Activated T-helper 2 cell treated with anti-CD3 and anti-CD28 coated beads, Interferon-gamma antibody, Interleukin-2, Interleukin-4, amounts not matched to agents 10 μg/mL and 5 μg/mL and 100 μg/mL, durations not matched to agents 14 hours and 24 hours and 36 hours (primary cell): ENCODE measurements at regions of chr20 and their contacts with region 1.

Region 1: DNA sequence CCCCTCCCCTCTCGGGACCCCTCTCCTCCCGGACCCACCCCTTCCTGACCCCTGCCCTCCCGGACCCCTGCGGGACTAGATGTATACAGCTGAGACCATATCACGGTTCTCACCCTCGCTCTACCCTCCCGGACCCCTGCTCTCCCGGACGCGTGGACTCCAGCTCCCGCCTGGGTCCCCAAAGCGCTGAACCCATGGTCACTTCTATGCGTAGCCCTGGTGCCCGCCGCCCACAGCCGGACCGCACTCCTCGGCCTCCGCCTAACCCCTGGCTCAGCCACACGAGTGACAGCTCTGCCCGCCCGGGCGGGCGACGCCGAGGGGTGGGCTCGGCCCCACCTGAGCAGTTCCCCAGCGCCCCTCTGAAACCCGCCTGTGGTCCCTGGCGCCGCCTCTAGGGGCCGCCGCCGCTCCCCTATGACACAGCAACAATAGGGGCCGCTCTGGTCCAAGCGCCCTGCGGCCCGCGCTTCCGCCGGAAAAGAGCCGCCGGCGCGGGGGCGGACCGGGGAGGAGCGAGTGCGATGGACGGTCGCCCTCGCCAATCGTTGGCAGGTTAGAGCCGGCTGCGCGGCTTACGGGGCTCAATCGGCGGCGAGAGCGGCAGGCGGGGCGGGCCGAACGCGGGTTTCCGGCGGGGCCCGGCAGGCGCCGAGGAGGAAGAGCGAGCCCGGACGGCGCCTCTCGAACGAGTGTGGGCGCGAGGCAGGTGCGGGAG is at the start of gene ADRM1:
- DNase-seq: peak; percentile 96
- H3K4me3 Mint-ChIP-seq: peak within 1 kb of the TSS; percentile 93
- H3K27ac Mint-ChIP-seq: peak within 1 kb of the TSS; percentile 99
- H3K4me1 Mint-ChIP-seq: peaks cover 13% of the 10 kb centered on the region
- H3K27me3 Mint-ChIP-seq: no peaks in the 10 kb centered on the region
- total RNA-seq, gene ADRM1: 152 and 171 TPM in 2 replicates

Region 2: DNA sequence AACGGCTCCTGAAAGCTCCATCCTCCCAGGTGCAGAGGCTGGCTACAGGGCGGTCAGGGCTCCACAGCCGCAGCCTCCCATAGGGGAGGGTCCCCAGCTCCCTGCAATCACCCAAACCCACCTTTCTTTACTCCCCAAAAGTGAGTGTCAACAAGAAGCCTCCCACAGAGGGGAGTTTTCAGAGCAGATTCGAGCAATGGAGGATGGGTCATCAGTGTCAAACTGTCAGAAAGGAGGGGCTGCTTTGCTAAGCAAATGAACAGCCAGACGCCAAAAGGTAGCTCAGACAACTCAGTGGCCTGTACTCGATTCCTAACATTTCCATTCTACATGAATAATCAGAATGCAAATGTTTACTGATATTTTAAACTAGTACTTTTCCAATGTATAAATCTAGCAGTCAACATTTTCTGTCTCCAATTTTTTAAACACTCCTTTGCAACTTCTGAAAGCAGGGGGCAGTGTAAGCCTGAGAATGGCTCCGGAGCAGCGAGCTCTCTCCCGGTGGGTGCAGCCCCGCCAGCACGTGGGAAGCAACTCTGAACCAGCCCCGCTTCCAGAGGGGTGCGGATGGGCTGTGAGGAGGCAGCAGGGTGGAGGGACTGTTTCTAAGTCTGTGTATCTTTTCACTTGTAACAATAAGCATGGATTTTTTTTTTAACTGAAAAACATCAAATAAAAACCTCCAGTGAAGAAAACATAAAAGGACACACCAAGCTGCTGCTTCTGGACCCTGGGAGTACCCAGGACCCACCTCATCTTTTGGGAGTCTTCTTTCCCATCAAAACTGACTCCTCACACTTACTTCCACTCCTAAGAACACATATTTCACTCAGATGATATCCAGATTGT is 291.7 kb before region 1 on chr20:
- intact Hi-C with region 1: loop called (anchors 5 kb)
- DNase-seq: peak; percentile 26
- H3K4me3 Mint-ChIP-seq: no peak overlapping the region
- H3K27ac Mint-ChIP-seq: no peak overlapping the region
- H3K4me1 Mint-ChIP-seq: peaks cover 3% of the 10 kb centered on the region
- H3K27me3 Mint-ChIP-seq: no peaks in the 10 kb centered on the region

Region 3: DNA sequence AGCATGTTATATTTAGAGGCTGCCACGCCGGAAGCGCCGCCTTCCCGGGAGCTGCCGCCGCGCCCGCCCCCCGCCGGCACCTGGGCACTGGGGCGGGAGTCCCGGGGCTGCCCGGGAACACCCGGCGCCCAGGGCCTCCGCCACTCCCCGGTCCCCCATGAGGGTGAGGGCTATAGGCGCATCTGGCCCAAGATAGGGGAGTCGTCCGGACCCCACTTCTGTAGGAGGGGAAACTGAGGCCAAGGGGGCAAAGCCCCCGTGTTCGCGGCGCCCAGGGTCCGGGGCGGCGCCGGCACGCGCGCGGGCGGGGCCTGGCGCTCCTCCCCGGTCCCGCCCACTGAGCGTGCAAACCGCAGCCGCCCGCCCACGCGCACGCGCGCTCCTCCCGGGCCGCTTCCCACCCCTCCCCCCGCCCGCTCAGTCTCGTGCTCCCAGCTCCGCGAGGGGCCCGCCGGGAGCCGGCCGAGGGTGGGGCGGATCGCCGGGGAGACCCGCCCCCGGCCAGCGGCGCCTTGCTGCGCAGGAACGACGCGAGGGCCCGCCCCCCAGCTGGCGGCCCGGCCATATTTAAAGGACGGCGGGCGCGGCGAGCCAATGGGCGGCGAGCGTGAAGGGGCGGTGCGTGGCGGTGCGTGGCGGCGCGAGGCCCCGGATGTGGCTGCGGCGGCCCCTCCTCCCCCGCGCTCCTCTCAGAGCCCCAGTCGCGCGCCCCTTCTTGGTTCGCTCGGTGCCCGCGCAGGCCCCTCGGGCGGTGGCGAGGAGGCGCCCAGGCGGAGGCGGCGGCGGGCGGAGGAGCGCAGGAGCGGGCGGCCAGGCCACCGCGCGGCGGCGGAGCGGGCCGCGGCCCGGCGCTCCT is 180.5 kb before region 1 on chr20 and contains the start of gene LSM14B:
- intact Hi-C with region 1: loop called (anchors 5 kb)
- DNase-seq: peak; percentile 94
- H3K4me3 Mint-ChIP-seq: peak within 1 kb of the TSS; percentile 86
- H3K27ac Mint-ChIP-seq: peak within 1 kb of the TSS; percentile 88
- H3K4me1 Mint-ChIP-seq: peaks cover 30% of the 10 kb centered on the region
- H3K27me3 Mint-ChIP-seq: no peaks in the 10 kb centered on the region
- total RNA-seq, gene LSM14B: 42.9 and 45.0 TPM in 2 replicates

Region 4: GRCh38 chr20:62237801-62238571 is 64.5 kb before region 1 on chr20 and contains the start of gene OSBPL2:
- intact Hi-C with region 1: loop called (anchors 1 kb)
- DNase-seq: peak; percentile 100
- H3K4me3 Mint-ChIP-seq: peak within 1 kb of the TSS; percentile 78
- H3K27ac Mint-ChIP-seq: peak within 1 kb of the TSS; percentile 60
- H3K4me1 Mint-ChIP-seq: peaks cover 17% of the 10 kb centered on the region
- H3K27me3 Mint-ChIP-seq: no peaks in the 10 kb centered on the region
- total RNA-seq, gene OSBPL2: 29.3 and 29.9 TPM in 2 replicates

Region 5: GRCh38 chr20:62603021-62603906 is 300.8 kb after region 1 on chr20:
- intact Hi-C with region 1: loop called (anchors 2 kb)
- DNase-seq: peak; percentile 34
- H3K4me3 Mint-ChIP-seq: peak overlapping the region; percentile 66
- H3K27ac Mint-ChIP-seq: peak overlapping the region; percentile 56
- H3K4me1 Mint-ChIP-seq: peaks cover 37% of the 10 kb centered on the region
- H3K27me3 Mint-ChIP-seq: peaks cover 8% of the 10 kb centered on the region